ENCODE measurements at regions of chr11 and their contacts with region 1.

Region 1: DNA sequence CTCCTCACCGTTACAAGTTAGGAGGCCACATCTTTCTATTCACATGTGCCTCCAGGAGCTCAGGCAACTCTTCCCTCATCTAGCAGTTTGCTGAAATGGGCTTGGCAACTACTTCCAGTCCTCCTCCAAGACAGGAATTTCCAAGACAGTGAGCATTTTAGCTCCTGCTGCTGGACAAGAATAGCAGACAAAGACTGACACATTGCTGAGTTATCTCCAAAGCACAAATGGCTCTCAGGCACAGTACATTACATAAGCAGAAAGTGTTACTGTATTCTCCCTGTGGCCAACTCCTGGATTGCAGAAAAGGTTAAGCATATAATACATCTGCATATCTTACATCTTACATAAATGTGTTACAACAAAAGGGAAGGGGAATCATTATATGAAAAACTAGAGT is 83.2 kb upstream of the POU2AF2 start:
- DNase-seq: peak; percentile 59
- ATAC-seq: peak; percentile 65
- H3K4me3 ChIP-seq: no peak overlapping the region
- H3K27ac ChIP-seq: no peak overlapping the region
- H3K4me1 ChIP-seq: no peaks in the 10 kb centered on the region
- H3K27me3 ChIP-seq: no peaks in the 10 kb centered on the region
- CTCF ChIP-seq: 0 out of 2 replicates have a peak, but pooled peaks have one; percentile 3
- POLR2A ChIP-seq: no peak
- RAD21 ChIP-seq: no peak

Region 2: DNA sequence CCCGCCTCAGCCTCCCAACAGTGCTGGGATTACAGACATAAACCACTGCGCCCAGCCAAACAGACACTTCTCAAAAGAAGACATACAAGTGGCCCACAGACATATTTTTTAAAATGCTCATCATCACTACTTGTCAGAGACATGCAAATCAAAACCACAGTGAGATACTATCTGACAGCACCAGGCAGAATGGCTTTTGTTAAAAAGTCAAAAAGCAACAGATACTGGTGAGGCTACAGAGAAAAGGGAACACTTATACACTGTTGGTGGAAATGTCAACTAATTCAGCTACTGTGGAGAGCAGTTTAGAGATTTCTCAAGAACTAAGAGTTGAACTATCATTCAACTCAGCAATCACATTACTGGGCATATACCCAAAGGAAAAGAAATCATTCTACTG is 517.1 kb before region 1 on chr11:
- CTCF ChIA-PET with region 1: no interaction called
- POLR2A ChIA-PET with region 1: no interaction called
- dilution Hi-C with region 1: no loop called
- in situ Hi-C with region 1: no loop called
- intact Hi-C with region 1: no loop called
- DNase-seq: no peak
- ATAC-seq: no peak
- H3K4me3 ChIP-seq: no peak overlapping the region
- H3K27ac ChIP-seq: no peak overlapping the region
- H3K4me1 ChIP-seq: no peaks in the 10 kb centered on the region
- H3K27me3 ChIP-seq: no peaks in the 10 kb centered on the region
- CTCF ChIP-seq: no peak
- POLR2A ChIP-seq: no peak
- RAD21 ChIP-seq: no peak

Region 3: DNA sequence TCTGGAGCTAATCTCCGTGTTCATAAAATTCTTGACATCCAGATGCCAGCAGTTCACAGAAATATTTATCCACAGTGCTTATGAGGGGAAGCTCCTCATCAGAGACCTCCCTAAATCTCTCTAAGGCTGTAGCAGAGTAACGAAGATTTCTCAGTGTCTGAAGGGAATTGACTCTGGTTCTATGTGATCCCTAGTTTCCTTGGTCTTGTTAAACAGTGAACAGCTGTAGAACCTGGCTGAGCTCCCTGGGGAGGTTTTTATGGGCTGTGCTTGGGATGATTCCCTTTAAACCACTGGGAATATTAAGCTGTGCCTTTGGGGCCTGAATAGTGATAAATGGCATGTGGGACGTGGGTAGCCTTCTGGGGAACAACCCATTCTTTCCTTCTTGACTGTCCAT is 406.4 kb before region 1 on chr11:
- CTCF ChIA-PET with region 1: no interaction called
- POLR2A ChIA-PET with region 1: interaction called, 14 read pairs
- dilution Hi-C with region 1: no loop called
- in situ Hi-C with region 1: no loop called
- intact Hi-C with region 1: no loop called
- DNase-seq: no peak
- ATAC-seq: no peak
- H3K4me3 ChIP-seq: no peak overlapping the region
- H3K27ac ChIP-seq: no peak overlapping the region; the same call in 1 of the 2 replicates
- H3K4me1 ChIP-seq: peaks cover 13% of the 10 kb centered on the region
- H3K27me3 ChIP-seq: no peaks in the 10 kb centered on the region
- CTCF ChIP-seq: no peak
- POLR2A ChIP-seq: no peak
- RAD21 ChIP-seq: no peak

Region 4: DNA sequence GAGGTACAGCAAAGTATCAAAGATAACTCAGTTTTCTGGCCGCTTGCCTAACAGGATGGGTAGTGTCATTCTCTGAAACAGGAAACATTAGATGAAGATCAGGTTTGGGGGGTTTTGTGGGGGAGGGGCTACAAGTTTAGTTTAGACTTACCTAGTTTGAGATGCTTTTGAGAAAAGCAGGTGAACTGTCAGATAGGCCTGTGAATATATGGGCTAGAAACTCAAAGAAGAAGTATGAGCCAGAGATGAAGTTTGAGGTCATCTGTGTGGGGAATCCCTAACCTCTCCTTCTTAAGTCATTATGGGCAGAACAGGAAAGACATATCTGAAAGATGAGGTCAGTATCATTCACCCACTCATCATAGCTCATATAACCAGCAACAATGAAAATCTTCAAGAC is 364.2 kb after region 1 on chr11:
- CTCF ChIA-PET with region 1: no interaction called
- POLR2A ChIA-PET with region 1: no interaction called
- dilution Hi-C with region 1: no loop called
- in situ Hi-C with region 1: no loop called
- intact Hi-C with region 1: no loop called
- DNase-seq: peak; percentile 93
- ATAC-seq: peak; percentile 83
- H3K4me3 ChIP-seq: no peak overlapping the region
- H3K27ac ChIP-seq: no peak overlapping the region
- H3K4me1 ChIP-seq: peaks cover 2% of the 10 kb centered on the region; the same call in 1 of the 2 replicates
- H3K27me3 ChIP-seq: no peaks in the 10 kb centered on the region
- CTCF ChIP-seq: no peak
- POLR2A ChIP-seq: no peak
- RAD21 ChIP-seq: no peak

Measured in IMR-90 (cell line).